MCF 10A (cell line): ENCODE measurements at regions of chr2 and their contacts with region 1.

Region 1: GRCh38 chr2:219253753-219254590 is at the start of gene TUBA4A:
- DNase-seq: peak; percentile 84
- H3K4me3 Mint-ChIP-seq: peak within 1 kb of the TSS; percentile 91
- H3K27ac Mint-ChIP-seq: peak within 1 kb of the TSS; percentile 51
- H3K4me1 Mint-ChIP-seq: peaks cover 35% of the 10 kb centered on the region
- H3K27me3 Mint-ChIP-seq: no peaks in the 10 kb centered on the region
- CTCF ChIP-seq: no peak
- total RNA-seq, gene TUBA4A: 37.2 and 80.5 TPM in 2 replicates

Region 2: GRCh38 chr2:218788529-218789255 is 465.3 kb before region 1 on chr2:
- CTCF ChIA-PET with region 1: no interaction called
- POLR2A ChIA-PET with region 1: no interaction called
- intact Hi-C with region 1: no loop called
- DNase-seq: peak; percentile 4
- H3K4me3 Mint-ChIP-seq: no peak overlapping the region
- H3K27ac Mint-ChIP-seq: no peak overlapping the region
- H3K4me1 Mint-ChIP-seq: no peaks in the 10 kb centered on the region
- H3K27me3 Mint-ChIP-seq: no peaks in the 10 kb centered on the region
- CTCF ChIP-seq: no peak

Region 3: DNA sequence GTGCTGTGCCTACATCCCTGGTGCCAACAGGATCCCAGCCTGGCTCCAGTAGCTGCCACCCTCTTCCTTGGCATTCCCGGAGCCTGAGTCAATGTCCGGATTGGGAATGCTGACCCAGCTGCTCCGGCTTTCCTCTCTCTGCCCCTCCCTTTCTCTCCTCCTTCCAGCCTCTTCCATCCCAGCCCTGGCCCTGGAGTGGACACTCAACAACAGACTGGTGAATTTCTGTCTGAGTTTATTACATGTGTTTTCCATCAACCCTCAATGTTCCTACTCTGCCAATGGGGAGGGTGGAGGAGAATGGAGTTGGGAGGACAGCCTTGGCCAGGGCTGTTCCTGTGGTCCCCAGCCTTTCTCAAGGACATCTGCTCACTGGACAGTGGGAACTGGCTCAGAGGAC is 421.5 kb before region 1 on chr2:
- CTCF ChIA-PET with region 1: no interaction called
- POLR2A ChIA-PET with region 1: no interaction called
- intact Hi-C with region 1: no loop called
- DNase-seq: peak; percentile 58
- H3K4me3 Mint-ChIP-seq: no peak overlapping the region
- H3K27ac Mint-ChIP-seq: no peak overlapping the region
- H3K4me1 Mint-ChIP-seq: peaks cover 15% of the 10 kb centered on the region
- H3K27me3 Mint-ChIP-seq: peaks cover 8% of the 10 kb centered on the region
- CTCF ChIP-seq: no peak

Region 4: GRCh38 chr2:219020604-219021365 is 233.2 kb before region 1 on chr2:
- CTCF ChIA-PET with region 1: no interaction called
- POLR2A ChIA-PET with region 1: no interaction called
- intact Hi-C with region 1: no loop called
- DNase-seq: peak; percentile 61
- H3K4me3 Mint-ChIP-seq: no peak overlapping the region
- H3K27ac Mint-ChIP-seq: no peak overlapping the region
- H3K4me1 Mint-ChIP-seq: no peaks in the 10 kb centered on the region
- H3K27me3 Mint-ChIP-seq: no peaks in the 10 kb centered on the region
- CTCF ChIP-seq: no peak

Region 5: DNA sequence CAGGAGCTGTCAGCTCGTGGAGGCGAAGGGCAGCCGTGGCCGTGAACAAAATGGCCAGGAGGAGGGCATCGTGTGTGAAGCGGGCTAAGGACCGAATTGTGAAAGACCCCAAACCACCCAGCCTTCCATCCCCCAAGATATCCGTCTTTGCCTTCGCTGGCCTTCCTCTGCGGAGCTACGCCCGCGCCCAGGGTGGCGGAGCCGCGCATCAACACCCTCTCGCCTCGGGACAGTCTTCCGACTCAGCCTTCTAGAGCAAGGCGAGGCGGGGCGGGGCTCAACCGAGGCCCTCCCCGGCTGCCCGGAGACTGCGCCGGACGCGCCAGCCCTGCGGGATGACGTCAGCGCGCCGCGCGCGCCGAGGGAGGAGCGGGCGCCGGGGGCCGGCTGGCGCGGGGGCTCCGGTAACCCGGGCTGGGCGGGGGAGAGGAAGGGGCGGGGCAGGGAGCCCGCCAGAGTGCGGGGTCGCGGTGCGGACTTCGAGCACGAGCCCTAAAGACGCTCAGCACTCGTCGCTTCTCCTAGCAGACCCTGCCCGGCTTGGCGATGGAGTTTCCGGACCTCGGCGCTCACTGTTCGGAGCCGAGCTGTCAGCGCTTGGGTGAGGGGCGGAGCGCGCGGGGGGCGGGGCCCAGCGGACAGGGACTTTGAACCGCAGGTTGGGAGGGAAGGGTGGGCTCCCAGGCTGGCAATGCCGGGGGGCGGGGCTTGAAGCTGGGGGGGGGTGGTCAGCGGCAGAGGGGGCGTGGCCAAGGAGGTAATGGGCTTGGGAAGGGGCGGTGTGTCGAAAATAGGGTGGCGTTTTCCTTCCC is 47.3 kb before region 1 on chr2 and contains the start of gene ZFAND2B:
- CTCF ChIA-PET with region 1: interaction called, 4 read pairs
- POLR2A ChIA-PET with region 1: interaction called, 11 read pairs
- intact Hi-C with region 1: no loop called
- DNase-seq: peak; percentile 93
- H3K4me3 Mint-ChIP-seq: peak within 1 kb of the TSS; percentile 88
- H3K27ac Mint-ChIP-seq: peak within 1 kb of the TSS; percentile 94
- H3K4me1 Mint-ChIP-seq: peaks cover 15% of the 10 kb centered on the region
- H3K27me3 Mint-ChIP-seq: no peaks in the 10 kb centered on the region
- CTCF ChIP-seq: no peak
- total RNA-seq, gene ZFAND2B: 61.0 and 73.1 TPM in 2 replicates

Region 6: GRCh38 chr2:219218732-219219701 is 35.0 kb before region 1 on chr2 and contains the start of gene ABCB6:
- CTCF ChIA-PET with region 1: interaction called, 5 read pairs
- POLR2A ChIA-PET with region 1: interaction called, 63 read pairs
- intact Hi-C with region 1: loop called (anchors 2 kb)
- DNase-seq: peak; percentile 91
- H3K4me3 Mint-ChIP-seq: peak within 1 kb of the TSS; percentile 82
- H3K27ac Mint-ChIP-seq: peak within 1 kb of the TSS; percentile 83
- H3K4me1 Mint-ChIP-seq: no peaks in the 10 kb centered on the region
- H3K27me3 Mint-ChIP-seq: no peaks in the 10 kb centered on the region
- CTCF ChIP-seq: no peak
- total RNA-seq, gene ABCB6: 13.8 and 18.8 TPM in 2 replicates

Region 7: DNA sequence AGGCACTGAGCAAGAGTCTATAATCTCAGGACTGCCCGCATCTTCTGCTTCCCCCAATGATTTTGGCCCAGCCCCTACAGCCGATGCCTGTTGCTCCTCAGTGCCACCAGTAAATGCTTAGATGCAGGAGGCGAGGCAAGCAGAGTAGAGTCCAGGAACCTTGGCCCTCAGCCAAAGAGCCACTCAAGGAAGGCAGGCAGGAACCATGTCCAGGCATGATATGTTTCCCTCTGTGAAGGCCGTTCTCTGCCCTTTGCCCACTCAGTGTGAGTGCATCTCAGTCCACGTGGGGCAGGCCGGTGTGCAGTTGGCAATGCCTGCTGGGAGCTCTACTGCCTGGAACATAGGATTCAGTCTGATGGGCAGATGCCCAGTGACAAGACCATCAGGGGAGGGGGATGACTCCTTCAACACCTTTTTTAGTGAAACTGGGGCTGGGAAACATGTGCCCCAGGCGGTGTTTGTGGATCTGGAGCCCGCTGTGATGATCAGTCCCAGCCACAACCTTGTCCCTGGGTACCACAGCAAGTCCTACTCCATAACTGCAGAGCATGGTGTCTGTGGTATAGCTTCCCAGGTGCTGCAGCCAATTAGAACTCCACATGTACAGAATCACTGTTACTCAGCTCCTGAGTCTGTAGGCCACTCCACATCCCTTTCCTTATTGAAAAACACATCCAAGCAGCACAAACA is 15.5 kb after region 1 on chr2:
- CTCF ChIA-PET with region 1: interaction called, 8 read pairs
- POLR2A ChIA-PET with region 1: interaction called, 263 read pairs
- intact Hi-C with region 1: loop called (anchors 1 kb)
- DNase-seq: peak; percentile 63
- H3K4me3 Mint-ChIP-seq: no peak overlapping the region
- H3K27ac Mint-ChIP-seq: peak overlapping the region; percentile 58
- H3K4me1 Mint-ChIP-seq: peaks cover 20% of the 10 kb centered on the region
- H3K27me3 Mint-ChIP-seq: no peaks in the 10 kb centered on the region
- CTCF ChIP-seq: no peak

Region 8: DNA sequence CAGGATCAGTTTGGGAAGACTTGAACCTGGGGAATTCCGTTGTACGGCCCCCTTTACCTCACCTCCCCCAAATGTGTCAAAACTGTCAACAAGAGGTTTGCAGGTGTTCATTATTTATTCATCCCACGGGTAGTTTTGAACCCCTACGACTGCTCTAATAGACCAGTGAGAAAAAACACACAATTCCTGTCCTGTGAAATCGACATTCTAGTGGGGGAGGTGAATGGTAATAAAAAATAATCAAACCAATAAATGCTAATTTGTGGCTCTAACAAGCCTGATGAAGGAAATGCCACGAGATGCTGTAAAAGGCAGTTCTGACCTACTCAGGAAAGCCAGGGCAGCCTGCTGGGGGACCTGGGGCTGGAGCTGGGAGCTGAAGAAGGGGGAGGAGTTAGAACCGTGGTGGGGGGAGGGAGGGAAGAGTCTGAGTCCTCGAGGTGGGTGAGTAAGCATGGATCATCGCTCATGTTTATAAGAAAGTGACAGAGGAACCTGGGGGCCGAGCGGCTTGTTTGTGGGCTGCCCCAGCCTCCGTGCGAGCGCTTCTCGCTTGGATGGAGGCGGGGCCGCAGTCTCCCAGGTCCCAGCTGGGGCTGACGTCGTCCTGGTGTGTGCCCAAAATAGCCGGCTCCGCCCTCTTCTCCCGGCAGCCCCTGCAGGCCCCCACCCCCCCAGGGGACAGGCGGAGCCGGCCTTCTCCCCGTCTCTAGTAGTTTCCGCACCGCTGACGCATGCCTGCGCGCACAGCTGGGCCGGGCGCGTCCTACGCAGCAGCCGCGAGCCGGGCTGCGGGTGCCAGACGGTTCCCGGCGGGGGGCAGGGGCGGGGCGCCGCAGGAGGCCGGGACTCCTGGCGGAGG is 24.9 kb after region 1 on chr2 and contains the start of gene DNAJB2:
- CTCF ChIA-PET with region 1: interaction called, 42 read pairs
- POLR2A ChIA-PET with region 1: interaction called, 263 read pairs
- intact Hi-C with region 1: loop called (anchors 1 kb)
- DNase-seq: peak; percentile 97
- H3K4me3 Mint-ChIP-seq: peak within 1 kb of the TSS; percentile 86
- H3K27ac Mint-ChIP-seq: peak within 1 kb of the TSS; percentile 86
- H3K4me1 Mint-ChIP-seq: peaks cover 42% of the 10 kb centered on the region
- H3K27me3 Mint-ChIP-seq: no peaks in the 10 kb centered on the region
- CTCF ChIP-seq: no peak
- total RNA-seq, gene DNAJB2: 58.2 and 59.8 TPM in 2 replicates

Region 9: GRCh38 chr2:219285894-219286425 is 32.0 kb after region 1 on chr2:
- CTCF ChIA-PET with region 1: interaction called, 4 read pairs
- POLR2A ChIA-PET with region 1: interaction called, 263 read pairs
- intact Hi-C with region 1: no loop called
- DNase-seq: peak; percentile 68
- H3K4me3 Mint-ChIP-seq: peak overlapping the region; percentile 62
- H3K27ac Mint-ChIP-seq: peak overlapping the region; percentile 89
- H3K4me1 Mint-ChIP-seq: peaks cover 39% of the 10 kb centered on the region
- H3K27me3 Mint-ChIP-seq: no peaks in the 10 kb centered on the region
- CTCF ChIP-seq: no peak